Mammary epithelial cell (primary cell): ENCODE measurements at regions of chr7 and their contacts with region 1.

Region 1: GRCh38 chr7:20786779-20787659 is at the start of gene SP8:
- DNase-seq: peak; percentile 52
- H3K4me3 ChIP-seq: peak within 1 kb of the TSS; percentile 45 to 52 (median 48)
- H3K27ac ChIP-seq: no peak within 1 kb of the TSS
- H3K4me1 ChIP-seq: peaks cover 20% of the 10 kb centered on the region
- H3K27me3 ChIP-seq: peaks cover 20% of the 10 kb centered on the region
- CTCF ChIP-seq: no peak
- total RNA-seq, gene SP8: 0.21 TPM in 1 of 2 donors, not detected in the other

Region 2: DNA sequence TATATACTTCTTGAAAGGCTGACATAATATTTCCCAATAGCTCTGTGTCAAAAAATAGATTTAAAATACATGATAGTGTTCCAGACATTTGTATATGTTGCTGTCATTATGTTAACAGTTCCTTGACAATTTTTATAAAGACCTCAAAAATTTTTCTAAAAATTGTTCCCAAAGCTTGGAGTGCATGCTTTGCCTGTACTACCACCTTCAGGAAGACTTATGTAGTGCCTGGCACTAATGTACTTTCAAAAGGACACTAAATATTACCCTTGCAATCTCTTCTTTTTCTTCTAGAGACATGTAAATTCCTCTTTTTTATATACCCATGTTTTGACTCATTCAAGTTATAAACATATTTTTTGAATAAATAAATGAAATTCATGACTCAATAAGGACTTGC is 47.6 kb after region 1 on chr7:
- CTCF ChIA-PET with region 1: no interaction called
- dilution Hi-C with region 1: no loop called
- in situ Hi-C with region 1: no loop called
- intact Hi-C with region 1: loop called (anchors 1 kb)
- DNase-seq: no peak
- H3K4me3 ChIP-seq: no peak overlapping the region
- H3K27ac ChIP-seq: no peak overlapping the region
- H3K4me1 ChIP-seq: no peaks in the 10 kb centered on the region
- H3K27me3 ChIP-seq: no peaks in the 10 kb centered on the region
- CTCF ChIP-seq: peak; percentile 61 to 66

Region 3: GRCh38 chr7:20895563-20895962 is 108.5 kb after region 1 on chr7:
- CTCF ChIA-PET with region 1: no interaction called
- dilution Hi-C with region 1: no loop called
- in situ Hi-C with region 1: no loop called
- intact Hi-C with region 1: loop called (anchors 10 kb)
- DNase-seq: peak; percentile 91
- H3K4me3 ChIP-seq: no peak overlapping the region
- H3K27ac ChIP-seq: peak overlapping the region; percentile 92
- H3K4me1 ChIP-seq: peaks cover 29% of the 10 kb centered on the region
- H3K27me3 ChIP-seq: no peaks in the 10 kb centered on the region
- CTCF ChIP-seq: no peak

Region 4: GRCh38 chr7:21108182-21108581 is 321.2 kb after region 1 on chr7:
- CTCF ChIA-PET with region 1: no interaction called
- dilution Hi-C with region 1: no loop called
- in situ Hi-C with region 1: no loop called
- intact Hi-C with region 1: loop called (anchors 5 kb)
- DNase-seq: no peak
- H3K4me3 ChIP-seq: no peak overlapping the region
- H3K27ac ChIP-seq: no peak overlapping the region
- H3K4me1 ChIP-seq: peaks cover 29% of the 10 kb centered on the region
- H3K27me3 ChIP-seq: no peaks in the 10 kb centered on the region
- CTCF ChIP-seq: no peak

Region 5: GRCh38 chr7:21427182-21427870 is 640.3 kb after region 1 on chr7:
- CTCF ChIA-PET with region 1: no interaction called
- dilution Hi-C with region 1: no loop called
- in situ Hi-C with region 1: no loop called
- intact Hi-C with region 1: loop called (anchors 5 kb)
- DNase-seq: peak; percentile 99
- H3K4me3 ChIP-seq: peak overlapping the region; percentile 67 to 99 (median 69)
- H3K27ac ChIP-seq: peak overlapping the region; percentile 96
- H3K4me1 ChIP-seq: peaks cover 9% of the 10 kb centered on the region
- H3K27me3 ChIP-seq: no peaks in the 10 kb centered on the region
- CTCF ChIP-seq: no peak